BJ (cell line): ENCODE measurements at regions of chr11 and their contacts with region 1.

Region 1: DNA sequence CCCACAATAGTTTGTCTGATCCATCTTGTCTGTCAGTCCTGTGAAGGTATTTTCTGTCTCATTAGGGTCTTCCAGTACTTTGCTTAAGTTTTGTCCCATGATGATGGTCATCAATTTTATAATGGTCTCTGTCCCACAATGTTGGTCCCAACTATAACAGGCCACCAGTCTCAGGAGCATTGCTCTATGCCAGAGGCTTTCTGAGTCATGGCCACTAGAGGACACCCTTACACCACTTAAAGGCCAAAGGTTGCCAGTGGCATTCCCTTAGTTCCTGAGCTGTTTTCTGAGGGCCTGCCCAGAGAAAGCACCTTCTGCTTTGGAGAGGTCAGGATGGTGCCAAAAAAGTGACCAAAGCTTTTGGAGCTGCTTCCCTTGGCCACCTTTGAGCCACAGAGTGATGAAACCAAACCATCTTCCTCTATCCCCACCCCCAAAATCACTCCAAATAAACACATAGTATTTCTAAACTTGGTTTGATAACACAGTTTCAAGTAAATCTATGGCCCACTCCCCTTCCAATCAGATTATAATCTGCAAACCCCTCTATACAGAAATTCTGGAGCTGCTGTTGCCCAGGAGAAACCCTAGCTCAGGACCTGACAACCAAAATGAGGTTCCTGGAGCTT is 19.3 kb downstream of the EIF3F start:
- DNase-seq: no peak
- H3K4me3 ChIP-seq: no peak overlapping the region
- H3K27me3 ChIP-seq: no peaks in the 10 kb centered on the region
- CTCF ChIP-seq: peak; percentile 93

Region 2: DNA sequence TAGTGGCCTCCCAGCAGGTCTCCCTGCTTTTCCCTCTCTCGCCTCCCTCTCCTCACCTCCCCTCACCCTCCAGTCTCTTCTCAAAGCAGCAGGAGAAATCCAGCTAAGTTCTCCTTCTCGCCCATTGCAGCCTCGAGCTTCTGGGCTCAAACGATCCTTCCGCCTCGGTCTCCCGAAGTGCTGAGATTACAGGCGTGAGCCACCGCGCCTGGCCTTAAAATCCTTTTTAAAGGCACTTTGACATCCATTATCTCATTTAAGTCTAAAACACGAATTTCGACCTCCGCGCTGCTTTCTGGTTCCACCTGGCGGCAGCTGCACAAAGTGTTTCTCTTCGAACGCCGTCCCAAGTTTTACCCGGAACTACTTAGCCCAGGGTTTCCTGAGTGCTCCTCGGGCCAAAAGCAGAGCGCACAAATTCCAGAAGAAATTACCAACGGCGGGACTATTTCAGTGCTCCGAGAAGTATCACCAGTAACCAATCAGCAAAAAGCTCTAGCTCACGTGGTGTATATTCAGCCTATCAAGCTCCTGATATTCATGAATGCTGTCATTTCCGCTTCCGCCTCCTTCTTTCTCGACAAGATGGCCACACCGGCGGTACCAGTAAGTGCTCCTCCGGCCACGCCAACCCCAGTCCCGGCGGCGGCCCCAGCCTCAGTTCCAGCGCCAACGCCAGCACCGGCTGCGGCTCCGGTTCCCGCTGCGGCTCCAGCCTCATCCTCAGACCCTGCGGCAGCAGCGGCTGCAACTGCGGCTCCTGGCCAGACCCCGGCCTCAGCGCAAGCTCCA is 19.5 kb before region 1 on chr11 and contains the start of gene EIF3F:
- CTCF ChIA-PET with region 1: interaction called, 19 read pairs
- POLR2A ChIA-PET with region 1: interaction called, 3 read pairs
- DNase-seq: peak; percentile 99
- H3K4me3 ChIP-seq: peak within 1 kb of the TSS; percentile 78
- H3K27me3 ChIP-seq: no peaks in the 10 kb centered on the region
- CTCF ChIP-seq: peak; percentile 80
- polyA plus RNA-seq, gene EIF3F: 181 and 218 TPM in 2 replicates

Region 3: GRCh38 chr11:8018484-8019313 is 12.2 kb after region 1 on chr11:
- CTCF ChIA-PET with region 1: interaction called, 29 read pairs
- POLR2A ChIA-PET with region 1: no interaction called
- DNase-seq: no peak
- H3K4me3 ChIP-seq: peak overlapping the region; percentile 47
- H3K27me3 ChIP-seq: no peaks in the 10 kb centered on the region
- CTCF ChIP-seq: no peak

Region 4: DNA sequence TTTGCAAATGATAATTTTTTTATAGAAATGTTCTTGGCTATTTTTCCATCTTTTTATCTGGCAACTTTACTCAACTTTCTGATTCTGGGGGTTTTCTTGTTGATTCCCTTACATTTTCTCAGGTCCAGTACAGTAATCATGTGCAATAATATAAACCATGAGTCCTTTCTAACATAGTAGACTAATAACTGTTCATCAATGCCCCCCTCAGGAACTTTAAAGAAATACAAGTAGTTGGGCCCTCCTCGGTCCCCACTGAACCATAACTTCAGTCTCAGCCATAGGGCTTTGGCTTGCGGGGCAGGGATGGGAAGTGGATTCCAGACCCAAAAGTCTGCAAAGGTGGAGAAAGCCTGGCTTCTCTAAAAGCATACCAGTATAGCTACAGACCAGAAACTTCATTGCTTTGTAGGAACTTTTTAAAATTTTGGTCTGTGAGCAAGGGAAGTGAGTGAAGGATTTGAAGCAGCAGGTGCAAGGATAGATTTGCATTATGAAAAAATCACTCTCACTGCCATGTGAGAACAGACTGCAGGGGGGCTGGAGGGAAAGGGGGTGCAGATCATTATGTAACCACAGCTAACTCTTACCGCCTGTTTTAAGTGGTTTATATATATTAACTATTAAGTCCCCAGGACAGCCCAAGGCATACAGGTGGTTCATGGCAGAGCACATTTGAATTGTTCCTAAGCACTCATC is 64.1 kb after region 1 on chr11:
- CTCF ChIA-PET with region 1: interaction called, 18 read pairs
- POLR2A ChIA-PET with region 1: no interaction called
- DNase-seq: no peak
- H3K4me3 ChIP-seq: no peak overlapping the region
- H3K27me3 ChIP-seq: no peaks in the 10 kb centered on the region
- CTCF ChIP-seq: peak; percentile 50

Region 5: GRCh38 chr11:8111636-8112035 is 105.2 kb after region 1 on chr11:
- CTCF ChIA-PET with region 1: interaction called, 16 read pairs
- POLR2A ChIA-PET with region 1: no interaction called
- DNase-seq: no peak
- H3K4me3 ChIP-seq: no peak overlapping the region
- H3K27me3 ChIP-seq: peaks cover 6% of the 10 kb centered on the region; the same call in 1 of the 2 replicates
- CTCF ChIP-seq: no peak